Activated naive CD4-positive, alpha-beta T cell treated with anti-CD3 and anti-CD28 coated beads for 36 hours (primary cell): ENCODE measurements at regions of chr19 and their contacts with region 1.

Region 1: GRCh38 chr19:3762501-3763459 is at the start of gene MRPL54:
- DNase-seq: peak; percentile 99
- H3K4me3 Mint-ChIP-seq: peak within 1 kb of the TSS; percentile 99
- H3K27ac Mint-ChIP-seq: peak within 1 kb of the TSS; percentile 98
- H3K4me1 Mint-ChIP-seq: peaks cover 41% of the 10 kb centered on the region
- H3K27me3 Mint-ChIP-seq: no peaks in the 10 kb centered on the region
- total RNA-seq, gene MRPL54: 71.4 to 77.0 TPM

Region 2: GRCh38 chr19:3572132-3572854 is 190.5 kb before region 1 on chr19:
- CTCF ChIA-PET with region 1: no interaction called
- intact Hi-C with region 1: loop called (anchors 5 kb)
- DNase-seq: peak; percentile 100
- H3K4me3 Mint-ChIP-seq: peak overlapping the region; percentile 75
- H3K27ac Mint-ChIP-seq: peak overlapping the region; percentile 56
- H3K4me1 Mint-ChIP-seq: peaks cover 14% of the 10 kb centered on the region
- H3K27me3 Mint-ChIP-seq: no peaks in the 10 kb centered on the region

Region 3: DNA sequence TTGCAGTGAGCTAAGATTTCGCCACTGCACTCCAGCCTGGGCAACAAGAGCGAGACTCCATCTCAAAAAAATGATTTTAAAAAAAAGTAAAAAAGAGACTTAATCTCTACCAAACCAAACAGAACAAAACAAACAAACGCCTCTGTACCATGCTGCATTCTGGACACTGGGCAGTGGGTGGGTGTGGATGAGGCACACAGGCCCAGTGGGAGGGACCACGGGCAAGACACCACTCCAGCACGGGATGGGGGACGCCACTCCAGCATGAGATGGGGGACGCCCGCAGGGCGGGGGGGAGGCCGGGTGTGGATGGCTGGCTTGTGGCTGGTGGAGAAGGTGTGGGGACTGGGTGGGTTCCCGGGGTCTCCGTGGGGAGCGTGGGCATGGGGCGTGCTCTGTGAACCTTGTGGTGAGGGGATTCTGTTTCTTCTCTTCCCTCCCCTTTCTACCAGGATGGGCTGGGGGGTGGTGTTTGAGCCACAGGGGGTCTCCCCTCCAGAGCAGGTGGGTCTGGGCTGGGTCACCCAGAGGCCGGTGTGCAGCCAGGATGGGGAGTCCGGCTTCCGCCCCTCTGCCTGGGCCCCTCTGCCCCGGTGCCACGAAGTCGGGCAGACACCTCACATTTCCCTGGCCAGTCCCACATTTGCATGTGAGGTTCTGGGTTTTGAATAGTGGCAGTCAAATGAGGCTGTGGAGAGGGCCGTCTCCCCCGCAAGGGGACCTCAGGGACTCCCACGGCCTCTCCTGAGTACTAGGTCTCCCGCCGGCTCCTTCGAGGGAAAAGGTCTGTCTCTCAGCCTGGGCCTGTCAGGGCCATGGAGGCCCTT is 47.3 kb after region 1 on chr19:
- CTCF ChIA-PET with region 1: interaction called, 6 read pairs
- intact Hi-C with region 1: loop called (anchors 2 kb)
- DNase-seq: peak; percentile 62
- H3K4me3 Mint-ChIP-seq: no peak overlapping the region
- H3K27ac Mint-ChIP-seq: no peak overlapping the region
- H3K4me1 Mint-ChIP-seq: peaks cover 38% of the 10 kb centered on the region
- H3K27me3 Mint-ChIP-seq: no peaks in the 10 kb centered on the region

Region 4: GRCh38 chr19:3984908-3985642 is 222.3 kb after region 1 on chr19 and contains the start of gene EEF2:
- CTCF ChIA-PET with region 1: interaction called, 5 read pairs
- intact Hi-C with region 1: loop called (anchors 5 kb)
- DNase-seq: peak; percentile 88
- H3K4me3 Mint-ChIP-seq: peak within 1 kb of the TSS; percentile 91
- H3K27ac Mint-ChIP-seq: peak within 1 kb of the TSS; percentile 94
- H3K4me1 Mint-ChIP-seq: peaks cover 52% of the 10 kb centered on the region
- H3K27me3 Mint-ChIP-seq: no peaks in the 10 kb centered on the region
- total RNA-seq, gene EEF2: 3,747 to 3,914 TPM

Region 5: DNA sequence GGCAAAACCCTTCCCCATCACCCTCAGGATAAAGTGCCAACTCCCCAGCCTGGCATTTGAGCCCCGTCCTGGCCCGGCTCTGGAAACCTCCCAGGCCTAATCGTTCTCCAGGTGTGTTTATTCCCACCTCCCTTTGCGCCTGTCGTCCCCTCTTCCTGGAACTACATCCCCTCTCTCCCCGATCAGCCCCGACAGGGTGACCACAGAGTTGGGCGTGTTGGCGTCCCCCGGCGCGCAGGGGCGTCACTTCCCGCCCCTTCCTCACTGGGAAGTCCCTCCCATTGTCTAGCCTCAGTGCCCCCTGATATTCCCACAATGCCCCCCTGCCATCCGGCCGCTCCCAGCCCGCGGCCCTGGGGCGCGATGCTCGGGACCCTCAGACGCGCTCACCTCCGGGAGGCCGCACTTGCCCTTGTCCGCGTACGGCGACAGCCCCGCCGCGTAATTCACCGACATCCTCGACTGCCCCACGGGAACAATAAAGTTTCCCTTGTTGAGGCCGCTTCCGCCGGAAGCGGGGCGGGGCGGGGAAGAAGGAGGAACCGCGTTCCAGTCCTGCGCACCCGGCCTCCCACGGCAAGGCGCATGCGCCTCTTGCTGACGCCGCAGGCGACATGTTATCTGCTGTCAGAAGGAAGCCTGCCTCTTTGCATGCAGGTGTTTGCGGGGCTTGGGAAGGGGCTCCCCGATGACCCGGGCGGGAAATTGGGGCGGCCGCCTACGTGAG is 419.5 kb after region 1 on chr19 and contains the starts of genes ANKRD24 and SIRT6:
- CTCF ChIA-PET with region 1: no interaction called
- intact Hi-C with region 1: loop called (anchors 1 kb)
- DNase-seq: peak; percentile 97
- H3K4me3 Mint-ChIP-seq: peak within 1 kb of the TSS; percentile 97
- H3K27ac Mint-ChIP-seq: peak within 1 kb of the TSS; percentile 93
- H3K4me1 Mint-ChIP-seq: peaks cover 34% of the 10 kb centered on the region
- H3K27me3 Mint-ChIP-seq: no peaks in the 10 kb centered on the region
- total RNA-seq, gene ANKRD24: 2.5 to 2.6 TPM
- total RNA-seq, gene SIRT6: 20.0 to 20.1 TPM

Region 6: GRCh38 chr19:4723367-4724187 is 960.8 kb after region 1 on chr19 and contains the start of gene DPP9:
- CTCF ChIA-PET with region 1: no interaction called
- intact Hi-C with region 1: loop called (anchors 5 kb)
- DNase-seq: peak; percentile 98
- H3K4me3 Mint-ChIP-seq: peak within 1 kb of the TSS; percentile 91
- H3K27ac Mint-ChIP-seq: peak within 1 kb of the TSS; percentile 97
- H3K4me1 Mint-ChIP-seq: peaks cover 22% of the 10 kb centered on the region
- H3K27me3 Mint-ChIP-seq: peaks cover 3% of the 10 kb centered on the region
- total RNA-seq, gene DPP9: 40.8 to 41.9 TPM